MCF 10A (cell line): ENCODE measurements at regions of chr6 and their contacts with region 1.

Region 1: DNA sequence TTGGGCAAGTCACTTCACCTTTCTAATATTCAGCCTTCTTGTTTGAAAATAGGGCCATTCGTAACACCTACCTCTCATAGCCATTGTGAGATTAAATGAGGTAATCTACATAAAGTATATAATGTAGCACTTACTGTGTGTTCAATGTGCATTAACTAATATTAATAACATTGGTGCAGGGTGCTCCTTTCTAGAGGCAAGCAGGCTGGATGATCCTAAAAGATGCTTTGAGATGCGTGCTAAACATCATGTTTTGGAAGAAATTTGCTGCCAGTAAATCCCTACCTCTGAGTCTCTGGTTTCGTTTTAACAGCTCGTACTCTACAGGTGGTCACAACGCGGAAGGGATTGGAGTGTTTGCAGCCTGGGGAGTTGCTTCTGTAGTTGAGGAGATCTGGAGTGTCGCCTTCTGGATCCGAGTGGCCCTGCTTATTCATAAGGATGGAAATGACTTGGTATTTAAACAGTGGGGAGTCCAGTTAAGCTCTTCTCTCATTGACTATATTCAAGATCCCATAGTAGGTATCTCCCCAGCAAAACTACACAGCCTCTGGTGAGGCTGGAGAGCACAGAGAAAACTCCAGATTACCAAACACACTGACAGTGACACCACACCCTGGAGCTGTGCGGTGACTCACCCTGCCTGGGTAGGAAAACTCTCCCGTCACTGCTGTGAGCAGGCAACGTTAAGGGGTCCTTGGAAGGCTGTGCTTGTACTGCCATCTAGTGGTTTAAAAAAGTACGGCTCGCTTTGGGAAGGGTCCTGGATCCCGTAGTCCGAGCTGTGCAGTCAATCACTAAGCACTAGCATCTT is 107.9 kb downstream of the MAP3K7 start:
- DNase-seq: peak; percentile 96
- H3K4me3 Mint-ChIP-seq: no peak overlapping the region
- H3K27ac Mint-ChIP-seq: peak overlapping the region; percentile 32
- H3K4me1 Mint-ChIP-seq: peaks cover 18% of the 10 kb centered on the region
- H3K27me3 Mint-ChIP-seq: no peaks in the 10 kb centered on the region
- CTCF ChIP-seq: peak; percentile 71

Region 2: DNA sequence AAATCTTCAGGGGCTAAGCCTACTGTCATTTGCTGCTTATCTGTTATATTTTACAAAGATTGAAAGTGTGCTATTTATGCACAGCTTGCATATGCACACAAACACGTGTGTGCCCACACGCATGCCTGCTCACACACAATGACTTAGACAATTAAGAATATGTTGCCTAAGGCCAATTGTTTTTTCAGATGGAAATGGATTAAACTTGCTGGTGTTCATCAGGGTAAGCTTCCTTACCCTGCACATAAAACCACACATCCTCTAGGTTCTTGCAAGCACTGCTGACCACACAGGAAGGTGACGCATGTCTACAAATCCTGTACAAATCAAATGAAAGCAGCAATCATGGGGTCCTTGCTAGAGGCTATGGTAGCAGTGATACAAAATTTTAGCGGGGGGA is 526.3 kb before region 1 on chr6:
- CTCF ChIA-PET with region 1: interaction called, 11 read pairs
- POLR2A ChIA-PET with region 1: no interaction called
- intact Hi-C with region 1: no loop called
- DNase-seq: peak; percentile 80
- H3K4me3 Mint-ChIP-seq: no peak overlapping the region
- H3K27ac Mint-ChIP-seq: no peak overlapping the region
- H3K4me1 Mint-ChIP-seq: peaks cover 42% of the 10 kb centered on the region
- H3K27me3 Mint-ChIP-seq: no peaks in the 10 kb centered on the region
- CTCF ChIP-seq: no peak

Region 3: GRCh38 chr6:89999154-89999553 is 479.8 kb before region 1 on chr6:
- CTCF ChIA-PET with region 1: interaction called, 11 read pairs
- POLR2A ChIA-PET with region 1: interaction called, 4 read pairs
- intact Hi-C with region 1: no loop called
- DNase-seq: peak; percentile 95
- H3K4me3 Mint-ChIP-seq: no peak overlapping the region
- H3K27ac Mint-ChIP-seq: no peak overlapping the region
- H3K4me1 Mint-ChIP-seq: peaks cover 13% of the 10 kb centered on the region
- H3K27me3 Mint-ChIP-seq: no peaks in the 10 kb centered on the region
- CTCF ChIP-seq: no peak

Region 4: GRCh38 chr6:90216072-90216977 is 262.7 kb before region 1 on chr6:
- CTCF ChIA-PET with region 1: no interaction called
- POLR2A ChIA-PET with region 1: no interaction called
- intact Hi-C with region 1: loop called (anchors 5 kb)
- DNase-seq: peak; percentile 24
- H3K4me3 Mint-ChIP-seq: no peak overlapping the region
- H3K27ac Mint-ChIP-seq: no peak overlapping the region
- H3K4me1 Mint-ChIP-seq: no peaks in the 10 kb centered on the region
- H3K27me3 Mint-ChIP-seq: no peaks in the 10 kb centered on the region
- CTCF ChIP-seq: no peak

Region 5: GRCh38 chr6:90296346-90297114 is 182.5 kb before region 1 on chr6 and contains the start of gene BACH2:
- CTCF ChIA-PET with region 1: interaction called, 6 read pairs
- POLR2A ChIA-PET with region 1: interaction called, 8 read pairs
- intact Hi-C with region 1: loop called (anchors 1 kb)
- DNase-seq: peak; percentile 89
- H3K4me3 Mint-ChIP-seq: peak within 1 kb of the TSS; percentile 76
- H3K27ac Mint-ChIP-seq: peak within 1 kb of the TSS; percentile 39
- H3K4me1 Mint-ChIP-seq: peaks cover 9% of the 10 kb centered on the region
- H3K27me3 Mint-ChIP-seq: peaks cover 17% of the 10 kb centered on the region
- CTCF ChIP-seq: no peak
- total RNA-seq, gene BACH2: 7.5 and 9.9 TPM in 2 replicates

Region 6: GRCh38 chr6:90490030-90490716 is 11.2 kb after region 1 on chr6:
- CTCF ChIA-PET with region 1: interaction called, 11 read pairs
- POLR2A ChIA-PET with region 1: interaction called, 4 read pairs
- intact Hi-C with region 1: no loop called
- DNase-seq: no peak
- H3K4me3 Mint-ChIP-seq: no peak overlapping the region
- H3K27ac Mint-ChIP-seq: no peak overlapping the region
- H3K4me1 Mint-ChIP-seq: peaks cover 6% of the 10 kb centered on the region
- H3K27me3 Mint-ChIP-seq: no peaks in the 10 kb centered on the region
- CTCF ChIP-seq: no peak